ENCODE measurements at regions of chrX and their contacts with region 1.

Region 1: DNA sequence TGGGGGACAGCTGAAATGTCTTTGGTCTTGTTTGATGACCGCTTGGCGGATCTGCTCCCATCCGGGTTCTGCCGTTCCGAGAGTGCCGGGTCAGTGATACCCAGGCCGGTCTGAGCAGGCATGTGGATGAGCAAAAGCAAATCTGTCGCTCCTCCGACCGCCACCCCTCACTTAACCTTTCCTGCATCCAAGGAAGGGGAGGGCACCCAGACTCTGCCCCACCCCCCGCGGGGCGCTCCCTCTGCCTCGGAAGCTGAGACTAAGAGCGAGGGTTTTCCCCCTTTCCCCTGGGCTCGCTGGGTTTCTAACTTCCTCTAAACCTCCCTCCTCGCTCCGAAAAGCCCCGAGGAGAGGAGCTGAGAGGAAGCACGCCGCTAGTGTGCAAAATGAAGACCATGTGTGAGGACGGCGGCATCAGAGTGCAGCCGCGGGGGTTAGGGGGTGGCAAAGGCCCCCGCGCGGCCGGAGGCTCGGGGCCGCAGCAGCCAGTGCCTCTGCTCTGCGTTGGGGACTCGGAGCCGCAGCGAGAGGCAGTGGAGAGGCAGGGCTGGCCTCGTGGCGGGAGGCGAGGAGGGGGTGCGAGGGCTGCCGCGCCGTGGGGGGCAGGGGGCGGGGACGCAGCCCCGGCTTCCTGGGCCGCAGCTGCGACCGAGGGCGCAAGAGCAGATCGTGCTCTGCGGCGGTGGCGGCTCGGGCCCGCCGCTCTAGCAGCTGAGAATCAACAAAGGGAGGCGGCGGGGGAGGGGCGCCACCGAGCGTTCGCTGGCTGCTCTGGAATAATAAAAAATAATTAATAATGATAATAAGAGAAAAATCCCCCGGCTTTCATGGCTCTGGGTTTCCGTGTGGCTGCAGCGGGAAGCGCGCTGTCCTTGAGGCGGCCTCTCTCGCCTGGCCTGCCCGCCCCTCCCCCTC is 55.8 kb upstream of the BCOR start:
- DNase-seq: peak in 36 of 42 donors; percentile 40 to 84 (median 64)

Region 2: GRCh38 chrX:39777623-39778025 is 376.0 kb before region 1 on chrX:
- intact Hi-C with region 1: no loop called
- DNase-seq: no peak

Region 3: GRCh38 chrX:39814391-39814790 is 339.2 kb before region 1 on chrX:
- intact Hi-C with region 1: loop called (anchors 10 kb)
- DNase-seq: peak in 7 of 42 donors; percentile 15 to 59 (median 23)

Region 4: GRCh38 chrX:39953883-39954282 is 199.7 kb before region 1 on chrX:
- intact Hi-C with region 1: no loop called
- DNase-seq: peak in 1 of 42 donors; percentile 16

Region 5: DNA sequence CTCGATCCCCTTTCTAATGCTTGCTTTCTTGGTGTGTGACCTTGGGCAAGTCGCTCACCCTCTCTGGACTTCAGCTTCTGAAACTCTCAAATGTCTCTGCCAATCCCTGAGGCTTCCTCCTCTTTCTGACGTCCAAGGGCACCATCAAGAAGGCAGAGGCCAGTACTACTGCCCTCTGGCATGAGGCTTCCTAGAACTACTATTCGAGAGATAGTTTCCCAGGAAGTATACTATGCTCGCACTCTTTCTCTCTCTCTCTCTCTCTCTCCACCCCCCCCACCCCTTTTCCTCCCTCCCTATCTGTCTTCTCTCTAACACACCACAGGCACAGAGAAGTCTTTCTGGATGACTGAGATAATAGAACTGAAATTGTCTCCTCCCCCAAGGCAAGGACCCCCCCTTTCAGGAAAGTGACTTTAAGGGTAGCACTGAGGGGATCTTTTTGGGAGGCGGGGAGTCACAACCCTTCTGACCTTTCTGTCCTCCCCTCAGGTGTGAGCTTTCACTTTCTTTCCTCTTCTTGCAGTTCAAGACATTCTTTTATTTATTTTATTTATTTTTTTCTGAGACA is 35.8 kb before region 1 on chrX:
- intact Hi-C with region 1: no loop called
- DNase-seq: no peak

Region 6: GRCh38 chrX:41100200-41100599 is 946.6 kb after region 1 on chrX:
- intact Hi-C with region 1: no loop called
- DNase-seq: no peak

Measured in head of caudate nucleus (tissue), 42 donors.